ENCODE measurements at regions of chr10 and their contacts with region 1.

Region 1: DNA sequence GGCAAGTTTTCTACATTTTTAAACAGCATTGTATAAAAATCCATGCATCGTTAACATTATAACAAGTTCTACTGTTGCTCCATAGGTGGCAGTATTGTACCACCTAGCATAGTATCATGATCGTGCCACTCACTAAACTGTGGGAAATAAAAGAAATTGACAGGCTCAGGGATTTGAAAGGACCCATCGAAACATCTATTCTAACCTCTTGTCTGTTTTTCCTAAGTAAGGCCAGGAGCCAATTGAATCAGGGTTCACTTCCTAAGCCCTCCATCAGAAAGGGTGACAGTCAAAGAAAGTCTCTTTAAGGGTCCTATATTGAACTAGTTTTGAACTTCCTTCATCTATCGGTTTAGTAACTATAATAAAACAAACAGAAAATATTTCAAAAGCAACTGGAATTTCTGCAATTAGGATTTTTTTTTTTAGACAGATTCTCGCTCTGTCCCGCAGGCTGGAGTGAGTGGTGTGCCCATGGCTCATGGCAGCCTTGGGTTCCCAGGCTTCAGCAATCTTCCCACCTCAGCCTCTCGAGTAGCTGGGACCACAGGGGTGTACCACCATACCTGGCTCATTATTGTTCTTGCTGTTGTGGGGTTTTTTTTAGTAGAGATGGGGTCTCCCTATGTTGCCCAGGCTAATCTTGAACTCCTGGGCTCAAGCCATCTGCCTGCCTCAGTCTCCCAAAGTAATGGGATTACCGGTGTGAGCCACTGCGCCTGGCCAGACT is 9.4 kb downstream of the HACD1 start:
- DNase-seq: no peak
- ATAC-seq: peak; percentile 45 to 82 (median 75)
- H3K4me3 ChIP-seq: no peak overlapping the region
- H3K27ac ChIP-seq: no peak overlapping the region
- H3K4me1 ChIP-seq: peaks cover 0 to 29% (median 10%) of the 10 kb centered on the region in 12 donors
- H3K27me3 ChIP-seq: no peaks in the 10 kb centered on the region
- CTCF ChIP-seq: peak; percentile 83 to 95 (median 90)
- POLR2A ChIP-seq: no peak

Region 2: DNA sequence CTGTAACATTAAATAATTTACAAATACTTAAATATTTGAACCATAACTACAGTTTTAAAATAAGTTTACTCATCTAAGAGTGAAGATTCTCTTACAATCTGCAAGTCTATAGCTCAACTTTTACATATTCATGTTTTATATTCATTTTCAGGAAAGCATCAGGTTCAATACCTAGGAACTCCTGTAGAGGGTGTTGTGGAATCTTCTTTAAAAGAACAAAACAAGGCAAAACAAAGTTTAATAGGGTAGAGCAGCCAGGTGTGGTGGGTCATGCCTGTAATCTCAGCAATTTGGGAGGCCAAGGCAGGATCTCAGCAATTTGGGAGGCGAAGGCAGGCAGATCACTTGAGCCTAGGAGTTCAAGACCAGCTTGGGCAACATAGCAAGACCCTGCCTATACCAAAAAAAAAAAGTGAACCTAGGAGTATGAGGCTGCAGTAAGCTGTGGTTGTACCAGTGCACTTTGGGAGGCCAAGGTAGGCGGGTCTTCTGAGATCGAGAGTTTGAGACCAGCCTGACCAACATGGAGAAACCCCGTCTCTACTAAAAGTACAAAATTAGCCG is 198.5 kb before region 1 on chr10:
- intact Hi-C with region 1: no loop called
- DNase-seq: no peak
- ATAC-seq: no peak
- H3K4me3 ChIP-seq: no peak overlapping the region
- H3K27ac ChIP-seq: no peak overlapping the region
- H3K4me1 ChIP-seq: no peaks in the 10 kb centered on the region
- H3K27me3 ChIP-seq: no peaks in the 10 kb centered on the region
- CTCF ChIP-seq: peak in 11 of 12 donors; percentile 13 to 51 (median 32)
- POLR2A ChIP-seq: no peak

Region 3: GRCh38 chr10:17742918-17743317 is 135.2 kb after region 1 on chr10:
- intact Hi-C with region 1: loop called (anchors 1 to 5 kb)
- DNase-seq: peak; percentile 29 to 70 (median 56)
- ATAC-seq: no peak
- H3K4me3 ChIP-seq: peak overlapping the region in 2 of 12 donors; percentile 21 to 24
- H3K27ac ChIP-seq: no peak overlapping the region
- H3K4me1 ChIP-seq: peaks cover 0 to 29% (median 4%) of the 10 kb centered on the region in 12 donors
- H3K27me3 ChIP-seq: no peaks in the 10 kb centered on the region
- CTCF ChIP-seq: peak; percentile 72 to 89 (median 86)
- POLR2A ChIP-seq: no peak

Region 4: DNA sequence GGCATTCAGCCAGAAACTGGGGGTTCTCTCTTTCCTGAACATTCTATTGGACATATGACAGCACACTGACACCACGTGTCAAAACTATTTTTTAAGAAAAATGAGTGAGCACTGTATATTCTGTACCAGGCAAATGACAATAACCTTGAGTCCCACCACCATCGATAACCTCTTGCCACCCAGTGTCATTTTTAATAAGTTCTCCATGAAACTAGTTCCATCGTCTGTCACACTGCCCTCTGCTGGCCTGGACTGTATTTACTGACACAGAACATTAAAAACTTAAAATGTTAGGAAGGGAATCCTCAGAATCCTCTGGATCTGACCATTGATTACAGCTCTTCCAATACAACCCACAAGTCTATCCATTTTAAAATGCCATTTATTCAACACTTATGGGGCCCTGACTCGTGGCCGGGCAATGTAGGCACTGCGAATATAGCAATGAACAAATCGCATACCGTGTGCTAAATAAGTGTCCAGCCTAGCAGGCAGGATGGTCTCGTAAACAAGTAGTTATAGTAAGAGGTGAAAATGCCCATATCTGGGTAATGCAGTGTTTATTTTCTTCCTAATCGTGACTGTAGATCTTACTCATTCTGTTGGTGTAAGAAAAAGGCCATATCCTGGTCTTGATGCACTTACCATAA is 496.6 kb after region 1 on chr10:
- intact Hi-C with region 1: loop called in 5 of 10 experiments (anchors 5 to 10 kb)
- DNase-seq: peak in 4 of 5 donors; percentile 36 to 59 (median 42)
- ATAC-seq: no peak
- H3K4me3 ChIP-seq: no peak overlapping the region
- H3K27ac ChIP-seq: no peak overlapping the region
- H3K4me1 ChIP-seq: no peaks in the 10 kb centered on the region
- H3K27me3 ChIP-seq: no peaks in the 10 kb centered on the region
- CTCF ChIP-seq: peak; percentile 51 to 76 (median 66)
- POLR2A ChIP-seq: no peak

Region 5: DNA sequence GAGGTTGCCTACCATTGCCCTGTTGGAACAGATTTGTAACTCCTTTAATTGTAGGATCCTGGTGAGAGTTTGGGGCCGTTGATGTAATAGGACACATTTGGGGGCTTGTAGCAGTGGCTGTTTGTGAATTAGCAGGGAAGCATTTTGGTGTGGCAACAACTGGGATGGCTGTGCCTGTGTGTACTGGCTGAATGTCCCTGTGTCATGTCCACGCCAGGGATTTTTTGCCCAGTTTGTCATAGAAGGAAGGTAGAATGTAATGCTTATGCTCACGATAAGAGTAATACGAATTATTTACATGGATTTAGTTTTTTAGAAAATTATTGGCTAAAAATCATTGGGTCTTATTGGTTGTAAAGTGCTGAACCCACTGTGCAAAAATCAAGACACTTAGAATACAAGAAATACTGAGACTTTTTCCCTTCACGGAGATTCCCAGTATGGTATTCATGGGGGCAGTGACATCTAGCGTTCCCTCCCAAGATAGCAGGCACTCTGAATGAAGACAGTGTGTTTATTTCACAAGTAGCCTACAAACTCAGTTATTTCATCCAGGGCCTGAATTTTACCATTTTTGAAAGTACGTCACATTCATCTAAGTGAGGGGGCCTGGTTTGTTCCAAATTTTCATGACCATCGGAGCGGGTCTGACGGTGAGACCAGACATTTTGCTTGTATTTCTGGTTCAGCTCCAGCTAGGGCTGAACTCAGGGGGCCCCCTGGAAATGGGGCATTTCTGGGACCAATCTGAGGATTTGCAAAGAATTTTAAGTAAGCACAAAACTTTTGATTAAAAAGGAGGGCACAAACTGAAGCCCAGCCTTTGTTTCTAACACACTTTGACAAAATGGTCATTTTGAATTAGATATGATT is 607.2 kb after region 1 on chr10:
- intact Hi-C with region 1: loop called in 5 of 10 experiments (anchors 5 kb)
- DNase-seq: peak in 1 of 5 donors; percentile 29
- ATAC-seq: peak in 3 of 4 donors; percentile 70 to 81 (median 80)
- H3K4me3 ChIP-seq: peak overlapping the region in 1 of 12 donors; percentile 20
- H3K27ac ChIP-seq: peak overlapping the region in 1 of 12 donors; percentile 9
- H3K4me1 ChIP-seq: peaks cover 0 to 25% (median 2%) of the 10 kb centered on the region in 12 donors
- H3K27me3 ChIP-seq: no peaks in the 10 kb centered on the region
- CTCF ChIP-seq: peak; percentile 63 to 90 (median 78)
- POLR2A ChIP-seq: no peak

Region 6: GRCh38 chr10:18238870-18239485 is 631.2 kb after region 1 on chr10:
- intact Hi-C with region 1: loop called in 1 of 10 experiments (anchors 5 kb)
- DNase-seq: no peak
- ATAC-seq: no peak
- H3K4me3 ChIP-seq: no peak overlapping the region
- H3K27ac ChIP-seq: peak overlapping the region in 1 of 12 donors; percentile 34
- H3K4me1 ChIP-seq: peaks cover 0 to 14% (median 3%) of the 10 kb centered on the region in 12 donors
- H3K27me3 ChIP-seq: no peaks in the 10 kb centered on the region
- CTCF ChIP-seq: peak; percentile 27 to 73 (median 60)
- POLR2A ChIP-seq: no peak